ENCODE measurements at regions of chr1 and their contacts with region 1.

Region 1: DNA sequence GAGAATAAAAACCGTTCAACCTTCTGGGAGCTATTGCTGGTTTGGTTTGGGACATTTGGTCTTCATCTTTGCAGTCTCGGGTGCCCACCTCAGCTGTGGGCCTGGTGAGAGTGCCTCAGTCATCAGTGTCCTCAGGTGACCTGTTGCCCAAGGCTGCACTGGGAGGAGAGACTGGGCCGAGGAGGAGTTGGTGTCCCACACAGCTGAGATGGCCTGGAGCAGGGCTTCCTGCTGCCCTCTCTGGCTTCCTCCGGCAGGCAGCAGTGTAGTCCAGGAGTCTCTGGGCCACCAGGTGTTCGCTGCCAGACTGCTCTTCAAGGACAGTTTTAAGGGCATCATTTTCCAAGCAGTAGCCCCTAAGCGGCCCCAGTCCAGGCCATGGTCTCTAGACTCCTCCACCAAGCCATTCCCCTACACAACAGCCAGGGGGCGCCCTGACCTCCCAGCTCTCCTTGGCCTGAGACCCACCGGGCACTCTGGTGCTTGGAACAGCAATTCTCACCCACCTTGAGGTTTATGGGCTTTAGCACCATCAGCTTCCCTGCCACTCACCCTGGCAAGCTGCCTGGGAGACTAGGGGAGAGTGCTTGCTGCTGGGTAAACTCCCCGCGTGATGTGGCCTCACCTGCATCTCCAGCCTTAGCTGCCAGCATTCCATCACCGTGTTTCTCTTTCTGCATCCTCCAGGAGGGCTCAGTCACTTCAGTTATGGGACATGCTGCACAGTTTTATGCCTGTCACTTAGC is 9.1 kb upstream of the SYTL1 start:
- DNase-seq: peak; percentile 73
- ATAC-seq: peak; percentile 90
- H3K4me3 ChIP-seq: no peak overlapping the region
- H3K4me3 Mint-ChIP-seq: no peak overlapping the region
- H3K27ac ChIP-seq: no peak overlapping the region
- H3K27ac Mint-ChIP-seq: peak overlapping the region; percentile 15
- H3K4me1 ChIP-seq: peaks cover 11 to 24% of the 10 kb centered on the region in 2 donors
- H3K4me1 Mint-ChIP-seq: peaks cover 38% of the 10 kb centered on the region
- H3K27me3 ChIP-seq: no peaks in the 10 kb centered on the region
- H3K27me3 Mint-ChIP-seq: no peaks in the 10 kb centered on the region
- CTCF ChIP-seq: peak; percentile 87

Region 2: DNA sequence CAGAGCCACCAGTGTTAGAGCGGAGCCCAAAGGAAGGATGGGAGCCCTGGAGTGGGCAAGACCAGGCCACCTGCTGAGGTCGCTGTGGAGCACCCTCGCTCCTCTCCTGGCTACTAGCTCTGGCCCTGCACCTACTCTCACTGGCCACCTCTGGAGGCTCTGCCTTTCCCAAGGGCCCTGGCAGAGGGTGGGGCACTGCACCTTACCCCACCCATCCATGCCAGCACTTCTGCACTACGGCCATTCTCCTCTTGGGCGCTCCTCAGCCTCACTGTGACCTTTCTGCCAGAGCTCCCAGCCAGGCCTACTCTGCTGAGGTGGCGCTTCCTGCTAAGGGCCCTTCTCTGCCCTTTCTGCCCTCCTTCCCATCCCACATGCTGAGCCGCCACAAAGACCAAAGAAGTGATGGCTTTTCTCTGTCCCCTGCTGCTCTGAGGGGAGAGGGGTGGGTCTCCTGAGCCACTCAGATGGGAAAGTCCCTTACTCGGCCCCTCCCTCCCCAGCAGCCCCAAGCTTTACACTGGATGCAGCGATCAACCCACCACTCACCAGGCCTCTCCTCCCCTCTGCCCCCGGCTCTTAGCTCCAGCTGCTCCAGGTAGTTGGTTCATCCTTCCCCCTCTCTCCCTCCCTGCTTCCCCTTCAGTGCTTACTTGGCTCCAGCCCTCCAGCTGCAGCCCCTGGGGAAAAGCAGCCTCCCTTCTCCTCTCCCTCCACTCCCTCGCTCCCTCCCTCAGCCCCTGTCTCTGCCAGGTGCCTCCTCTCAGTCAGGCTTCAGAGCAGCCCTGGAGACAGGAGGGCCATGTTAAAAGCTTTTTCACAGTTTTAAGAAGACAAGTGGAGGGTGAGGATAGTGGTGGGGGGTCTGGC is 25.6 kb before region 1 on chr1:
- CTCF ChIA-PET with region 1: interaction called, 51 read pairs
- POLR2A ChIA-PET with region 1: no interaction called
- intact Hi-C with region 1: no loop called
- DNase-seq: no peak
- ATAC-seq: no peak
- H3K4me3 ChIP-seq: no peak overlapping the region
- H3K4me3 Mint-ChIP-seq: no peak overlapping the region
- H3K27ac ChIP-seq: no peak overlapping the region
- H3K27ac Mint-ChIP-seq: no peak overlapping the region
- H3K4me1 ChIP-seq: no peaks in the 10 kb centered on the region
- H3K4me1 Mint-ChIP-seq: no peaks in the 10 kb centered on the region
- H3K27me3 ChIP-seq: no peaks in the 10 kb centered on the region
- H3K27me3 Mint-ChIP-seq: no peaks in the 10 kb centered on the region
- CTCF ChIP-seq: no peak

Region 3: GRCh38 chr1:27349784-27350662 is 17.3 kb after region 1 on chr1:
- CTCF ChIA-PET with region 1: interaction called, 132 read pairs
- POLR2A ChIA-PET with region 1: interaction called, 3 read pairs
- intact Hi-C with region 1: no loop called
- DNase-seq: no peak
- ATAC-seq: peak; percentile 65
- H3K4me3 ChIP-seq: peak overlapping the region in 3 of 5 experiments; percentile 24 to 41 (median 27)
- H3K4me3 Mint-ChIP-seq: peak overlapping the region; percentile 50
- H3K27ac ChIP-seq: no peak overlapping the region
- H3K27ac Mint-ChIP-seq: no peak overlapping the region
- H3K4me1 ChIP-seq: peaks cover 6 to 13% of the 10 kb centered on the region in 2 donors
- H3K4me1 Mint-ChIP-seq: peaks cover 18% of the 10 kb centered on the region
- H3K27me3 ChIP-seq: no peaks in the 10 kb centered on the region
- H3K27me3 Mint-ChIP-seq: no peaks in the 10 kb centered on the region
- CTCF ChIP-seq: no peak

Region 4: DNA sequence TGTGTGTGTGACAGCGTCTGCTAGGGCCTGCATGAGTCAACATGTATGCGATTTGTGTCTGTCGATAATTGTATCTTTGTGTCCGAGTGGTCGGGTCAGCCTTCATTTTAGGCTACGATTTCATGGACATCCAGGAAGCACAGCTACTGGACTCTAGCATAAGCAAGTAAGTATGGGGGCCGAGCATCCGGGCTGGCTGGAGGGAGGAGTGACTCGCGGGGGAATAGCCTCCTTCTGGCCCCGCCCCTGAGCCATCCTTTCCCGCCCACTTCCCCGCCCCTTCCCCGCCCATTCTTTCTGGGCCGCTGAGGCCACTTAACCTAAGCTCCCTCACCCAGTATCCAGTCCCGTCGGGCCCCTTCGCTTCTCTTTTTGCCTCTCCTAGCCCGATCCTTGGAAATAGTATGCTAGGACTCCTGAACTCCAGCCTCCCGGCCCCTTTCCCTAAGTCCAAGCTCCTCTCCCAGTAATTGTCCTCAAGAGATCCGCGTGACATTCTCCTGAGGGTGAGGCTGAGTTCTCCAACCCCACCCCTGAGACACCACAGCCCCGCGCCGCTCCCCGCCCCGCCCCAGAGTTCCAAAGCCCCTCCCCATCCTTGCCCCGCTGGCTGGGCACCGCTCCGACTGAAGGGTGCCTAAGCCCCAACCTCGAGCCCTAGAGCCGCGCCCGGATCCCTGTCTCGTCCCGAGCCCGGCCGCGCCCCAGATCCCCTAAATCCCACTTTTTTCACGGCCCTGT is 32.8 kb after region 1 on chr1:
- CTCF ChIA-PET with region 1: interaction called, 132 read pairs
- POLR2A ChIA-PET with region 1: no interaction called
- intact Hi-C with region 1: no loop called
- DNase-seq: peak; percentile 88
- ATAC-seq: peak; percentile 70
- H3K4me3 ChIP-seq: peak overlapping the region; percentile 32 to 74 (median 60)
- H3K4me3 Mint-ChIP-seq: peak overlapping the region; percentile 93
- H3K27ac ChIP-seq: no peak overlapping the region
- H3K27ac Mint-ChIP-seq: peak overlapping the region; percentile 82
- H3K4me1 ChIP-seq: peaks cover 33 to 47% of the 10 kb centered on the region in 2 donors
- H3K4me1 Mint-ChIP-seq: peaks cover 54% of the 10 kb centered on the region
- H3K27me3 ChIP-seq: no peaks in the 10 kb centered on the region
- H3K27me3 Mint-ChIP-seq: no peaks in the 10 kb centered on the region
- CTCF ChIP-seq: no peak

Region 5: GRCh38 chr1:27392096-27392777 is 59.5 kb after region 1 on chr1 and contains the start of gene GPR3:
- CTCF ChIA-PET with region 1: interaction called, 96 read pairs
- POLR2A ChIA-PET with region 1: no interaction called
- intact Hi-C with region 1: loop called (anchors 1 kb)
- DNase-seq: peak; percentile 96
- ATAC-seq: peak; percentile 91
- H3K4me3 ChIP-seq: peak within 1 kb of the TSS in 4 of 5 experiments; percentile 34 to 60 (median 56)
- H3K4me3 Mint-ChIP-seq: peak within 1 kb of the TSS; percentile 81
- H3K27ac ChIP-seq: peak within 1 kb of the TSS in 1 of 2 donors; percentile 50
- H3K27ac Mint-ChIP-seq: peak within 1 kb of the TSS; percentile 67
- H3K4me1 ChIP-seq: peaks cover 12 to 24% of the 10 kb centered on the region in 2 donors
- H3K4me1 Mint-ChIP-seq: peaks cover 22% of the 10 kb centered on the region
- H3K27me3 ChIP-seq: no peaks in the 10 kb centered on the region
- H3K27me3 Mint-ChIP-seq: peaks cover 3% of the 10 kb centered on the region
- CTCF ChIP-seq: peak; percentile 65
- total RNA-seq, gene GPR3: not detected in 2 replicates

Region 6: DNA sequence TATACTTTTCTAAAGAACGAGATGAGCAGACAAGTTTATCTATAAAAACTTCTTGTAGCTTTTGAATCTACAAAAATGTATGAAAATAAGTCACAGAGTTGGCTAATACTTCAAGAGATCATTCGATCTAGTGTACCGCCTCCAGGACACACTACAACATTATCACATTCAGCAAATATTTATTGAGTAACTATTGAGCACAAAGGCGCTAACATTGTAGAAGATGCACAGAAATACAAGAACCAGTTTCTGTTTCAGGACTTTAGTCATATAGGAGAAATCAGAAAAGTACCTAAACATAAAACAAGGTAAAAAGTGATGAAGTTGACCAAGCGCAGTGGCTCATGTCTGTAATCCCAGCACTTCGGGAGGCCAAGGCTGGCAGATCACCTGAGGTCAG is 136.6 kb after region 1 on chr1:
- CTCF ChIA-PET with region 1: no interaction called
- POLR2A ChIA-PET with region 1: no interaction called
- intact Hi-C with region 1: no loop called
- DNase-seq: no peak
- ATAC-seq: no peak
- H3K4me3 ChIP-seq: no peak overlapping the region
- H3K4me3 Mint-ChIP-seq: no peak overlapping the region
- H3K27ac ChIP-seq: peak overlapping the region in 1 of 2 donors; percentile 15
- H3K27ac Mint-ChIP-seq: no peak overlapping the region
- H3K4me1 ChIP-seq: peaks cover 34 to 44% of the 10 kb centered on the region in 2 donors
- H3K4me1 Mint-ChIP-seq: peaks cover 69% of the 10 kb centered on the region
- H3K27me3 ChIP-seq: no peaks in the 10 kb centered on the region
- H3K27me3 Mint-ChIP-seq: no peaks in the 10 kb centered on the region
- CTCF ChIP-seq: no peak

Region 7: DNA sequence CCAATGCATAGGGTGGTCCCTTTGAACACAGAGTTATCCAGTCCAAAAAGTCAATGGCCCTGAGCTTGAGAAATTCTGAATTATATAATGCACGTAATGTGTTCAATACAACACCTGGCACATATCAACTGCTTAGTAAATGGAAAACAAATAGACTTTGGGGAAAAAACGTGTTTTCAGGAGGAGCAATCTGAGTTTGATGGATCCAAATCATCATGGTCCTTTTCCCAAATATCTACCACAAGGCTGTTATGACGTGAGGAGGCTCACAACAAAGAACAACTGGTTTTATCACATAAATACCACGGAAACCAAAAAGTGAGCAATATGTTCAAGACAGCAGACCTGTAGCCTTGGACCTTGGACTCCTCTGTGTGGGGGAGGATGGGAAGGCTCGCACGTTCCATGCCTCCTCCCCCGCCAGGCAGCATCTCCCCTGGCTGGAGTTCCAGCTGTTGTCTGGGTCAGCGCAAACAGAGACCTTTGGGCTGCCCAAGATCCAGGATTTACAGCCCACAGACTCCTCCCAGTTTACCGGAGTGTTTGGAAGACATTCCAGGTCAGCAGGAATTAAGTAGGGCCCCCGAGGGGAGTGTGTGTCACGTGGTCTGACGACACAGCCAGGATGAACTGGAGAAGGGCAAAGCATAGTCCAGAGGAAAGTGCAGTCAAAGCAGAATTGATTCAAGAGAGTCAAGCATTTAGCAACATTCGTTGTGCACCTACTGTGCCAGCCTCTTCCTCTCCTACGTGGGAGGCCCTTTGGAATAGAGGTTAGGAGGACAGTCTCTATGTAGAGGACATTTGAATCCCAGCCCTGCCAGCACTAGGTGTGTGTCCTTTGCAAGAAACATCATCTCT is 963.9 kb after region 1 on chr1:
- CTCF ChIA-PET with region 1: no interaction called
- POLR2A ChIA-PET with region 1: no interaction called
- intact Hi-C with region 1: no loop called
- DNase-seq: no peak
- ATAC-seq: no peak
- H3K4me3 ChIP-seq: no peak overlapping the region
- H3K4me3 Mint-ChIP-seq: no peak overlapping the region
- H3K27ac ChIP-seq: no peak overlapping the region
- H3K27ac Mint-ChIP-seq: no peak overlapping the region
- H3K4me1 ChIP-seq: no peaks in the 10 kb centered on the region
- H3K4me1 Mint-ChIP-seq: no peaks in the 10 kb centered on the region
- H3K27me3 ChIP-seq: no peaks in the 10 kb centered on the region
- H3K27me3 Mint-ChIP-seq: peaks cover 12% of the 10 kb centered on the region
- CTCF ChIP-seq: no peak